HEK293 (cell line): ENCODE measurements at regions of chr1 and their contacts with region 1.

Region 1: DNA sequence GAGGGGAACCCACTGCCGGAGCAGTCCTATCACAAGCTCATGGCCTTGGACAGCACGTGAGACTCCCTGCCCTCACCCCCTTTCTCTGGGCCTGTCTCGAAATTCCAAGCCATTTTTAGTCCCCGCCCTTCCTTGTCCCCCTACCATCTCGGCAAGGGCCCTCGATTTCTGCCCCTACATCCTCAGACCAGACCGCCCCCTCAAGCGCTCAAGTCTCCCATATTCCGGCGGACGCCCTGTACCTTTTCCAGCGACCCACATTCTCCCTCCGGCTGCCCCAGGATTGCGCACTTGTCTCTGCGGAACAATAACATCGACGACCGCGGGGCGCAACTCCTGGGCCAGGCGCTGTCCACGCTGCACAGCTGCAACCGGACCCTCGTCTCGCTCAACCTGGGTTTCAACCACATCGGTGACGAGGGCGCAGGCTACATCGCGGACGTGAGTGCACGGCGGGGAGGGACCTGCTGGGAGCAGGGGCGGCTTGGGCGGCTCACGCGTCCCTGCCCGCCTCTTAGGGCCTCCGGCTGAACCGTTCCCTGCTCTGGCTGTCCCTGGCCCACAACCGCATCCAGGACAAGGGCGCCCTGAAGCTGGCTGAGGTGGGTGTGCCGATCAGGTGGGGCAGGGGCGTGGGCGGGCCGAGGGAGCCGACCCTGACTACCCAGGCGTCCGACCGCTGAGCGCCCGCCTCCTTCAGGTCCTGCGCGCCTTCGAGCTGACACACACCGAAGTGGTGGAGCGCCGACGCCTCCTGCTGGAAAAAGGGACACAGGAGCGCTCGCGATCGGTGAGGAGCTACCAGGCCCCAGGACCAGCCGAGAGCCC is 7.0 kb downstream of the LRRC71 start:
- H3K4me3 ChIP-seq: peak overlapping the region; percentile 33
- H3K27ac ChIP-seq: no peak overlapping the region; the same call in 1 of the 2 replicates
- H3K4me1 ChIP-seq: no peaks in the 10 kb centered on the region; the same call in 1 of the 2 replicates
- CTCF ChIP-seq: peak; percentile 90

Region 2: GRCh38 chr1:156298852-156299357 is 628.5 kb before region 1 on chr1 and contains the start of gene VHLL:
- CTCF ChIA-PET with region 1: no interaction called
- POLR2A ChIA-PET with region 1: no interaction called
- H3K4me3 ChIP-seq: no peak within 1 kb of the TSS
- H3K27ac ChIP-seq: no peak within 1 kb of the TSS
- H3K4me1 ChIP-seq: peaks cover 3% of the 10 kb centered on the region; the same call in 1 of the 2 replicates
- CTCF ChIP-seq: no peak

Region 3: GRCh38 chr1:156797212-156797871 is 130.1 kb before region 1 on chr1:
- CTCF ChIA-PET with region 1: interaction called, 14 read pairs
- POLR2A ChIA-PET with region 1: no interaction called
- H3K4me3 ChIP-seq: no peak overlapping the region
- H3K27ac ChIP-seq: no peak overlapping the region
- H3K4me1 ChIP-seq: no peaks in the 10 kb centered on the region
- CTCF ChIP-seq: 0 out of 2 replicates have a peak, but pooled peaks have one; percentile 47

Region 4: GRCh38 chr1:156884560-156885184 is 42.8 kb before region 1 on chr1:
- CTCF ChIA-PET with region 1: interaction called, 199 read pairs
- POLR2A ChIA-PET with region 1: interaction called, 3 read pairs
- H3K4me3 ChIP-seq: no peak overlapping the region
- H3K27ac ChIP-seq: no peak overlapping the region
- H3K4me1 ChIP-seq: no peaks in the 10 kb centered on the region
- CTCF ChIP-seq: no peak

Region 5: GRCh38 chr1:156910309-156910782 is 17.1 kb before region 1 on chr1:
- CTCF ChIA-PET with region 1: interaction called, 49 read pairs
- POLR2A ChIA-PET with region 1: no interaction called
- H3K4me3 ChIP-seq: no peak overlapping the region
- H3K27ac ChIP-seq: no peak overlapping the region
- H3K4me1 ChIP-seq: no peaks in the 10 kb centered on the region
- CTCF ChIP-seq: peak; percentile 81

Region 6: GRCh38 chr1:157025856-157026255 is 98.4 kb after region 1 on chr1:
- CTCF ChIA-PET with region 1: no interaction called
- POLR2A ChIA-PET with region 1: no interaction called
- H3K4me3 ChIP-seq: no peak overlapping the region
- H3K27ac ChIP-seq: no peak overlapping the region
- H3K4me1 ChIP-seq: peaks cover 2% of the 10 kb centered on the region; the same call in 1 of the 2 replicates
- CTCF ChIP-seq: no peak

Region 7: DNA sequence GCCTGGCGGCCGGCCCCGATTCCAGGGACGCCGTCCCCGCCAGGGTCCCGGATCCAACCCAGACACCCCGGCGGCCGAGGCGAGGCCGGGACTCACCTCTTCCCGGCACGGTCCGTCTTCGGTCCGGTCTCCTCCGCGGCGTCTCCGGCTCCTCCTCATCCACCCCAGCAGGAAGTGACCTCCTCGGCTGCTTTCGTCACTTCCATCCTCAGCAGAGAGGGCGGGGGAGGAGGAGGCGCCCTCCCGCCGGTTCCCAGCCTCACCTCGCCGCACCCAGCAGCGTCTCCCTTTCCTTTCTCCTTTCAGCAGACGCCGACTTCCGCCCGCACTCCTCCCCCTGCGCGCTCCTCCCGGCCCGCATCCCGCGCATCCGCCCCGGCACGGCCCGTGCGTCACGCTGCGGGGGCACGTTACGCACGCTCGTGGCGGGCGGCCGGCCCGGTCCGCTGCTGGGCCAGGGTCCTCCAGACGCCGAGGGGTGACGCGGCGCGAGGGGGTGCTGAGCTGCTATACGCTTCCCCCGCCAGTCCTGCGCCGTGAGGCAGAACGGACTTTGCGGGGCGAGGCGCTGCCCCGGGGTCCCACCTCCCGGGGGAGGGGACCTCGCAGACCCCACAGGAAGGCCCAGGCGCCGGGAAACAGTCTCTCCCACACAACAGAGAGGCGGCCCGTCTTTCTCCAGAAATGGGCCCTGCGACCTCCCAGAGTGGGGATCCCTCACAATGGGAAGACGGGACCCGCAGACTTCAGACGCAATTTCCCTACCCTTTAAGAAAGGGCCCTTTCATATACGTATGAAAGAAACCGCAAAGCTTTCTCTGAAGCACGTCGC is 211.0 kb after region 1 on chr1 and contains the start of gene ETV3:
- CTCF ChIA-PET with region 1: no interaction called
- POLR2A ChIA-PET with region 1: no interaction called
- H3K4me3 ChIP-seq: peak within 1 kb of the TSS; percentile 71
- H3K27ac ChIP-seq: peak within 1 kb of the TSS; percentile 89
- H3K4me1 ChIP-seq: peaks cover 6% of the 10 kb centered on the region
- CTCF ChIP-seq: no peak

Region 8: GRCh38 chr1:157163273-157164127 is 236.1 kb after region 1 on chr1:
- CTCF ChIA-PET with region 1: no interaction called
- POLR2A ChIA-PET with region 1: no interaction called
- H3K4me3 ChIP-seq: no peak overlapping the region
- H3K27ac ChIP-seq: no peak overlapping the region
- H3K4me1 ChIP-seq: no peaks in the 10 kb centered on the region
- CTCF ChIP-seq: peak; percentile 82